Cardiac septum (tissue), 1 donor: ENCODE measurements at regions of chr19 and their contacts with region 1.

Region 1: GRCh38 chr19:18588611-18589379 is at the start of gene REX1BD:
- DNase-seq: peak; percentile 93
- total RNA-seq, gene REX1BD: 58.9 TPM

Region 2: GRCh38 chr19:18846862-18847548 is 258.2 kb after region 1 on chr19:
- intact Hi-C with region 1: loop called (anchors 5 kb)
- DNase-seq: peak; percentile 92